HEK293 (cell line): ENCODE measurements at regions of chr6 and their contacts with region 1.

Region 1: DNA sequence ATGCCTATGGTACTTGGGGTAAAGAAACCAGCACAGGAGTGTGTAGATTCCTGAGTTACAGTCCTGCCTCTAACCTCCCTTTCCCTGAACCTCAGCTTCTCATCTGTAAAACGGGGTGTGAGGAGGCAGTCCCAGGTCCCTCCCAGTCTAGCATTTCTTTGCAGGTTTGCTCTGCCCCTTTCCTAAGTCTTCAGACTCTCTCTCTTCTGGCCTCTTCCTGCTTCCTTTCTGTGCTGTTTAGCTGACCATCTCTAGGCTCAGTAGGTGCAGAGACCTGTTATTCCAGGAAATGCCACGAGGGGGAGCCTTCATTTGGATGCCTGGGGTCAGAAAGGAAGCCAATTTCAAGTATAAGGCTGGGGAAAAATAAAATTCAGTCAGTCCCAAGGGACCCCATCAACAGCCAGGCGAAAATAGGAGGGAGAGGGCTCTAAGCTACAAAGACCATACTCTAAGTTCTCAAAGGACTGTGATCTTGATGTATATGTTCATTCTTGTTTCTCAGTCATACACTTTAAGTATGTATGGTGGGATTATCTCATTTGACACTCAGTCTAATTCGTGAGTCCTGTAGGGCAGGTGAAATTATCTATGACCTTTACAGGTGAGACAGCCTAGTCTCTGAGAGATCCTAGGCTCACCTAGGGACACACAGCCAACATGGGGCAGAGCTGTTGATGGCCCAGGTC is 89.1 kb downstream of the NCR2 start:
- H3K4me3 ChIP-seq: no peak overlapping the region
- H3K27ac ChIP-seq: no peak overlapping the region
- H3K4me1 ChIP-seq: peaks cover 5% of the 10 kb centered on the region; the same call in 1 of the 2 replicates
- CTCF ChIP-seq: peak; percentile 51

Region 2: DNA sequence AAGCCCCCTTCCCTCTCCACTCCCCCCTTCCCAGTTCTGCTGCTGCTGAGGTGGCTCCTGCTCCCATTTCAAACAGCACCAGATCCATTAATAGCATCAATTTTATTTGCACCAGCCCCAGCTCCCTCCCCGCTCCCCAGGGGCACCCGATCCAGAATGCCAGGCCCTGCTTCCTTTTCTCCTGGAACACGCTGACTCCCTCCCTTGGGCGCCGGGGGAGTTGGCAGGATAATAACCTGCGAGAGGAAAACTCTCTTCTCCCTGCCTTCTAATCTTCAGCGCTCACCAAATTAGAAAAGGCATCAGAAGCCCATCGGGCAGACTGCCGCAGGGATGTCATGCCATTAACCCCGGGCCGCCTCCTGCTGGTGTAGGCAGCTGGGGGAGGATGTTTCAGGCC is 11.3 kb before region 1 on chr6:
- CTCF ChIA-PET with region 1: interaction called, 18 read pairs
- POLR2A ChIA-PET with region 1: no interaction called
- H3K4me3 ChIP-seq: no peak overlapping the region
- H3K27ac ChIP-seq: no peak overlapping the region
- H3K4me1 ChIP-seq: no peaks in the 10 kb centered on the region
- CTCF ChIP-seq: no peak

Region 3: GRCh38 chr6:41442800-41443501 is 18.4 kb after region 1 on chr6:
- CTCF ChIA-PET with region 1: interaction called, 86 read pairs
- POLR2A ChIA-PET with region 1: interaction called, 3 read pairs
- H3K4me3 ChIP-seq: no peak overlapping the region
- H3K27ac ChIP-seq: peak overlapping the region; percentile 68
- H3K4me1 ChIP-seq: peaks cover 22% of the 10 kb centered on the region
- CTCF ChIP-seq: peak; percentile 80

Region 4: DNA sequence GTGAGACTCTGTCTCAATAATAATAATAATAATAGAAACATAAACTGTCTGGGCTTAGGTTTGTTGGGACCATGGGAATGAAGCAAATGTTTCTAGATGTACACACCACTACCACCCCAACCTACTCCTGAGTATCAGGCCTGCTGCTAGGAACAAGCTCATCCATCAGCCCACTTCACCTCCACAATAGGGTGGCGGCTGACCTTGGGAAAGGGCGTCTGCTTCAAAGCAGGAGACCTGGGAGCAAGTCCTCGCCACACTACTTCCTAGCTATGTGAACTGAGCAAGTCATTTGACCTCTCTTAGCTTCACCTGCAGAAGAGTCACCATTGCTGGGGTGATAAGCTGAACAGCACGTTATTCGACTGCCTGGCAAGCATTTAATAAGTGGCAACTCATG is 118.6 kb after region 1 on chr6:
- CTCF ChIA-PET with region 1: interaction called, 10 read pairs
- POLR2A ChIA-PET with region 1: interaction called, 3 read pairs
- H3K4me3 ChIP-seq: no peak overlapping the region
- H3K27ac ChIP-seq: no peak overlapping the region
- H3K4me1 ChIP-seq: peaks cover 5% of the 10 kb centered on the region
- CTCF ChIP-seq: no peak

Region 5: GRCh38 chr6:41591859-41592502 is 167.5 kb after region 1 on chr6:
- CTCF ChIA-PET with region 1: interaction called, 118 read pairs
- POLR2A ChIA-PET with region 1: no interaction called
- H3K4me3 ChIP-seq: no peak overlapping the region
- H3K27ac ChIP-seq: no peak overlapping the region
- H3K4me1 ChIP-seq: no peaks in the 10 kb centered on the region; the same call in 1 of the 2 replicates
- CTCF ChIP-seq: peak; percentile 83